Gastrocnemius medialis (tissue), 4 donors: ENCODE measurements at regions of chrX and their contacts with region 1.

Region 1: GRCh38 chrX:47217642-47218279 is 720 bp upstream of the CDK16 start:
- DNase-seq: peak; percentile 94 to 98
- ATAC-seq: peak; percentile 82 to 88
- H3K4me3 ChIP-seq: peak overlapping the region; percentile 67 to 75 (median 72)
- H3K27ac ChIP-seq: peak overlapping the region; percentile 92 to 99 (median 96)
- H3K4me1 ChIP-seq: peaks cover 13 to 20% of the 10 kb centered on the region in 2 donors
- H3K27me3 ChIP-seq: no peaks in the 10 kb centered on the region
- CTCF ChIP-seq: no peak
- POLR2A ChIP-seq: no peak

Region 2: GRCh38 chrX:45505214-45505613 is 1712.5 kb before region 1 on chrX:
- in situ Hi-C with region 1: no loop called
- intact Hi-C with region 1: loop called (anchors 5 kb)
- DNase-seq: no peak
- ATAC-seq: no peak
- H3K4me3 ChIP-seq: no peak overlapping the region
- H3K27ac ChIP-seq: peak overlapping the region in 1 of 4 donors; percentile 83
- H3K4me1 ChIP-seq: peaks cover 0 to 28% of the 10 kb centered on the region in 2 donors
- H3K27me3 ChIP-seq: no peaks in the 10 kb centered on the region
- CTCF ChIP-seq: no peak
- POLR2A ChIP-seq: no peak

Region 3: DNA sequence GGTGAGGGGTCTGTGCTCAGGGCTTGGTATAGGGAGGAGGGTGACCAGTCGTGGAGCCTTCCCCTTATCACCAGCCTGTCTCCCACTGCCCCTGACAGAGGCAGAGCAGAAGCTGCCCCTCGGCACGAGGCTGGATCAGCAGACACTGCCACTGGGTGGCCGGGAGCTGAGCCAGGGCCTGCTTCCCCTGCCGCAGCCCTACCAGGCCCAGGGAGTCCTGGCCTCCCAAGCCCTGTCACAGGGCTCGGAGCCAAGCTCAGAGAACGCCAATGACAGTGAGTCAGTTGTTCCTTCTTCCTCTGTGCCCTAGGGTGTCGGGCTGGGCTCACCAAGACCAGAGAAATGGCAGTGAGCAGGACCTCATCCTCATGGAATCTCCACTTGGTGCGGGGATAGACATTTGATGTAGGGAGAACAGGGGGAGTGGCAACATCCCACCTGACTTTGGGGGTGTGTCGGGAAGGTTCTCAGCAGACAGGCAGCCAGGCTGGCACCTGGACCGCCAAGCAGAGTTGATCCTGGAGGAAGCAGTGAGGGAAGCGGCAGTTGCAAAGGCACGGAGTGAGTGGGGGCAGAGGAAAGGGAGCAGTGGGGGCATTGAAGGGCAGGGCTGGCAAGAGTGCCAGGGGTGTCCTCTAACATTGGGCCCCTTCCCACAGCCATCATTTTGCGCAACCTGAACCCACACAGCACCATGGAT is 38.4 kb before region 1 on chrX:
- in situ Hi-C with region 1: no loop called
- intact Hi-C with region 1: no loop called
- DNase-seq: peak; percentile 33 to 75
- ATAC-seq: peak; percentile 82 to 86
- H3K4me3 ChIP-seq: no peak overlapping the region
- H3K27ac ChIP-seq: peak overlapping the region; percentile 49 to 77 (median 70)
- H3K4me1 ChIP-seq: no peaks in the 10 kb centered on the region
- H3K27me3 ChIP-seq: no peaks in the 10 kb centered on the region
- CTCF ChIP-seq: no peak
- POLR2A ChIP-seq: no peak

Region 4: GRCh38 chrX:47233337-47234113 is 15.8 kb after region 1 on chrX:
- in situ Hi-C with region 1: no loop called
- intact Hi-C with region 1: loop called (anchors 1 kb)
- DNase-seq: peak; percentile 91 to 94
- ATAC-seq: peak; percentile 92 to 94
- H3K4me3 ChIP-seq: peak overlapping the region; percentile 57 to 84 (median 74)
- H3K27ac ChIP-seq: peak overlapping the region; percentile 88 to 93 (median 91)
- H3K4me1 ChIP-seq: peaks cover 0 to 3% of the 10 kb centered on the region in 2 donors
- H3K27me3 ChIP-seq: no peaks in the 10 kb centered on the region
- CTCF ChIP-seq: no peak
- POLR2A ChIP-seq: peak; percentile 36 to 76

Region 5: GRCh38 chrX:47523297-47523696 is 305.5 kb after region 1 on chrX:
- in situ Hi-C with region 1: loop called in 2 of 4 experiments (anchors 25 kb)
- intact Hi-C with region 1: no loop called
- DNase-seq: peak; percentile 50 to 70
- ATAC-seq: peak; percentile 85 to 96
- H3K4me3 ChIP-seq: peak overlapping the region; percentile 54 to 64 (median 60)
- H3K27ac ChIP-seq: peak overlapping the region in 2 of 4 donors; percentile 26 to 31
- H3K4me1 ChIP-seq: no peaks in the 10 kb centered on the region
- H3K27me3 ChIP-seq: no peaks in the 10 kb centered on the region
- CTCF ChIP-seq: peak; percentile 63 to 88 (median 85)
- POLR2A ChIP-seq: no peak

Region 6: DNA sequence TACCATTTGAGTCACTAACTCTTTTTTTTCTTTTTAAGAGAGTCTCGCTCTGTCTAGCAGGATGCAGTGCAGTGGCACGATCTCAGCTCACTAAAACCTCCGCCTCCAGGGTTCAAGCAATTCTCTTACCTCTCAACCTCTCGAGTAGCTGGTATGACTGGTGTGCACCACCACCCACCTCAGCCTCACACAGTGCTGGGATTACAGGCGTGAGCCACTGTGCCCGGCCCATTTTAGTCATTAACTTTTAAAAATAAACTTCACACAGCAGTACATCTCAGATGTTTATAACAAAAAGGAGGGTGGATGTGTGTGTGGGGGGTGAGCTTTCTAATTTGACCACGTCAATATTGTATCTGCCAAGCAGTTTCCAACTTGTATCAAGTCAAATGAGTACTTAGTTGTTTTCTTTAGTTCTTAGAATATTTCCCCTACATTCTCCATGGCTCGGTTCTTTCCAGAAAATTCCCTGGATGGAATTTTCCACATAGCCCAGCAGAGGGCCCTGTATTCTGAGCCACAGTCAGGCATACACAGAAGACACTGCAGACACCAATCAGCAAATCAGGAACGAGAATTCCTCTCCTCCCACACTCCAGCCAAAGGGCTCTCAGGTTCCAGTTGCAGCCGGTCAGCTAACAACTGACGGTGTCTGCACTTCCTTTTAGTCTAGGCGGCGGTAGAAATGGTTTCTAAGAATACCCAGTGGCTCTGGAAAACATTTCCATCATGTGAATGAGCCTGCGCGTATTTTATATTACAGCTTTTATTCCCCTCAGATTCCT is 323.2 kb after region 1 on chrX:
- in situ Hi-C with region 1: loop called in 1 of 4 experiments (anchors 25 kb)
- intact Hi-C with region 1: no loop called
- DNase-seq: peak; percentile 80 to 87
- ATAC-seq: peak; percentile 100
- H3K4me3 ChIP-seq: peak overlapping the region in 1 of 4 donors; percentile 11
- H3K27ac ChIP-seq: peak overlapping the region; percentile 78 to 85 (median 82)
- H3K4me1 ChIP-seq: peaks cover 10 to 16% of the 10 kb centered on the region in 2 donors
- H3K27me3 ChIP-seq: no peaks in the 10 kb centered on the region
- CTCF ChIP-seq: peak; percentile 41 to 58 (median 52)
- POLR2A ChIP-seq: peak; percentile 27 to 47

Region 7: DNA sequence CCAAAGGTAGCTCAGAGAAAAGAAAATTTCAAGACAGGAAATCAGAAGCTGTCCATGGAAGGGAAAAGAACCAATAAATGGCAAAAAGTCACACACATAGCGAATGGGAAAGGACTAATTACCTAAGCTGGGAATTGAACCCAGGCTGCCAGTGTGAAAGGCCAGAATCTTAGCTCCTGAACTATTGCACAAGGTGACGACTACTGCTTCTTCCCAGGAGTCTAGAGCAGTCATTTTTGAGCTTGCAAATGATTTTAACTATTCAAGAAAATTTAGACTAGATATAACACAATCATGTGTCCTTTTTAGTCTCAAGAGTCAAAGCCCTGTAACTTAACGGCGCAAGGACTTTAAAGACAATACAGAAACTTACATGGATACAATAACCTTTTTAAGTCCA is 584.8 kb after region 1 on chrX:
- in situ Hi-C with region 1: no loop called
- intact Hi-C with region 1: no loop called
- DNase-seq: no peak
- ATAC-seq: no peak
- H3K4me3 ChIP-seq: no peak overlapping the region
- H3K27ac ChIP-seq: no peak overlapping the region
- H3K4me1 ChIP-seq: no peaks in the 10 kb centered on the region
- H3K27me3 ChIP-seq: no peaks in the 10 kb centered on the region
- CTCF ChIP-seq: no peak
- POLR2A ChIP-seq: no peak

Region 8: DNA sequence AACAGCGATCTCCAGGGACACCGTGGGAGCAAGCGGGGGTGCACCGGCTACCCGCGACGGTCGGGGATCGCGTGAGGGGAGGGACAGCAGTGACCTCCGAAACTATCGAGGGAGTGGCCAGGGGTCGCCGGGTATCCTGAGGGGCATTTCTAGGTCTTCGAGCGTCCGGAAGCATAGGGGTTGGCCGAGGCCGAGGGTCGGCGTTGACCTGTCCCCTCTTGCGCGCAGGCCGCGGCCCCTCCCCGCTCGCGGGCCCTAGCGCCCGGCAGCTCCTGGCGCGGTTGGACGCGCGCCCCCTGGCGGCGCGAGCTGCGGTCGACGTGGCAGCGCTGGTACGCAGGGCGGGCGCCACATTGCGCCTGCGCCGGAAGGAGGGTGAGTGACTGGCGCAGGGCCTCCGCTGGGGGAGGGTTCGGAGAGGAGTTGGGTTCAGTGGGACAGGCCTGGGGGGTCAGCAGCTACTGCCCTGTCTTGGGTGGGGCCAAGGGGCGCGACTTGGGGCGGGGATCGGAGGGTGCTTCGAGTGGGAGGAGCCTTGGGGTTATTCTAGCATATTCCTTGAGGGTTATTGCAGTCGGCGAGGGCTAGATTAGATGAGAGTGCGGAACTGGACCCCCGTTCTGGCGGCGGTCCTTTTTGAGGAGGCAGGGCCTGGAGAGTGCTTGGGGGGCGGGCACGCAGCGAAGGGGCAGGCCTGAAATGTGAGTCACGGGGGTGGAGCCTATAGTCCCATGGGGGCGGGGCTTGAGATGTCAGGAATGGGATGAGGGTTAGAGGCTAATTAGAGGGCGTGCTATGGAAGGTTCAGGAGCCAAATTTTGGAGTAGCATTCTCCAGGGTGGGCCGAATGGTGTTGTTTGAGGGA is 1946.0 kb after region 1 on chrX:
- in situ Hi-C with region 1: no loop called
- intact Hi-C with region 1: loop called (anchors 5 kb)
- DNase-seq: peak; percentile 76 to 87
- ATAC-seq: peak; percentile 49 to 60
- H3K4me3 ChIP-seq: peak overlapping the region; percentile 37 to 61 (median 51)
- H3K27ac ChIP-seq: peak overlapping the region; percentile 93 to 98 (median 95)
- H3K4me1 ChIP-seq: peaks cover 8 to 10% of the 10 kb centered on the region in 2 donors
- H3K27me3 ChIP-seq: no peaks in the 10 kb centered on the region
- CTCF ChIP-seq: peak; percentile 56 to 93 (median 86)
- POLR2A ChIP-seq: peak; percentile 58 to 59